Activated naive CD4-positive, alpha-beta T cell treated with anti-CD3 and anti-CD28 coated beads for 36 hours (primary cell): ENCODE measurements at regions of chr11 and their contacts with region 1.

Region 1: GRCh38 chr11:128552783-128553661 is 34.3 kb downstream of the ETS1 start:
- DNase-seq: peak; percentile 68
- H3K4me3 Mint-ChIP-seq: peak overlapping the region; percentile 19
- H3K27ac Mint-ChIP-seq: peak overlapping the region; percentile 95
- H3K4me1 Mint-ChIP-seq: peaks cover 59% of the 10 kb centered on the region
- H3K27me3 Mint-ChIP-seq: no peaks in the 10 kb centered on the region

Region 2: DNA sequence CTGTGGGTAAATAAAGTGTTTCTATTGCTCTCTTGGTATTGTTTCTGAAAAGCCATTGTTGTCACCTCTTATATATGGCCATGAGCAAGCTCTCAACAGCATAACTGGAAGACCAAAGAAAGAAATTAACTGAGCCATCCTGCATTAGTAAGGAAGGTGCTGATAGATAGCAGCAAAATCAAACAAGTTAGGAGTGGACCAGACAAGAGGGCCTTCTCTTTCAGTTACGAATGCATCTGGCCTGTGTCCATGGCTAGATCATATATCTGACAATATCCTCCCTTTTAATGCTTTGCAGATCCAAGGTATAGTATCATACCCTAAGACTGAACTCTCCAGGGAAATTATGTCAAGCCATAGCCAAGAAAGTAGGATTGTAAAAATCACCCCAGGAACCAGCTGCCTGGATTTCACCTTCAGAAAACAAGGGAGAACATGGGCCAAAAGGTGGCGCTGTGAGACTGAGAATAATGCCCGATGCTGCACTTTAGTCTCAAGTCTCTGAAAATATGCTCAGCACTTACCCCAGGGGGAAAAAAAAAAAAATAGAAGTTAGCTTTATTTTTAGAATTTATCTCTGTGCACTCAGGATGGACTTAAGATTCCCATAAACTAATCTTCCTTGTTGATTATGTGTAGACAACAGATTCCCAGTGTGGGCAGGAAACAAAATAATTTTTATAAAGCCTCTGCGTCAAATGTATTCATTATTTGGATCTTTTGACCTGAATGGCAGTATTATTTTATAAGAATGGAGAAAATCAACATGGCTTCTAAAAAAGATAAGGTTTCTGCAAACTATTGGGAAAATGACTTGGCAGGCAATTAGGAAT is 380.8 kb before region 1 on chr11:
- CTCF ChIA-PET with region 1: interaction called, 3 read pairs
- intact Hi-C with region 1: loop called (anchors 1 kb)
- DNase-seq: peak; percentile 96
- H3K4me3 Mint-ChIP-seq: no peak overlapping the region
- H3K27ac Mint-ChIP-seq: no peak overlapping the region
- H3K4me1 Mint-ChIP-seq: peaks cover 7% of the 10 kb centered on the region
- H3K27me3 Mint-ChIP-seq: no peaks in the 10 kb centered on the region

Region 3: DNA sequence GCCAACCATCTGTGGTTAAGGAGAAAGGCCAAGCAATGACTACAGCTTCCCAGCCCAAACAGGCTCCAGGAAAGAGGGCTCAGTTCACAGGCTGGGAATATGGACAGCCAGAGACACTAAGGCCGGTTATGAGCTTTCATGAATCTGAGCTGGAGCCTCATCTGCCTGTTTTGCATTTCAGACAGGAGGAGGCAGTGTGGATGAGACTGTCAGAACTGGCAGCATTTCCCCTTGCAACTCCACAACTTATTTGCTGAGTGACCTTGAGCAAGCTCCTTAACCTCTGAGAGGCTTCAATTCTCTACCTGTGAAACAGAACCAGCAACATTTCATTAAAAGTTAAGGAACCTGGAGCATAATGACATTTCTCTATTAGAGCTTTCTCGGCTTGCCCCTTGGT is 229.6 kb before region 1 on chr11:
- CTCF ChIA-PET with region 1: no interaction called
- intact Hi-C with region 1: loop called (anchors 1 kb)
- DNase-seq: peak; percentile 72
- H3K4me3 Mint-ChIP-seq: peak overlapping the region; percentile 32
- H3K27ac Mint-ChIP-seq: peak overlapping the region; percentile 90
- H3K4me1 Mint-ChIP-seq: peaks cover 87% of the 10 kb centered on the region
- H3K27me3 Mint-ChIP-seq: no peaks in the 10 kb centered on the region

Region 4: DNA sequence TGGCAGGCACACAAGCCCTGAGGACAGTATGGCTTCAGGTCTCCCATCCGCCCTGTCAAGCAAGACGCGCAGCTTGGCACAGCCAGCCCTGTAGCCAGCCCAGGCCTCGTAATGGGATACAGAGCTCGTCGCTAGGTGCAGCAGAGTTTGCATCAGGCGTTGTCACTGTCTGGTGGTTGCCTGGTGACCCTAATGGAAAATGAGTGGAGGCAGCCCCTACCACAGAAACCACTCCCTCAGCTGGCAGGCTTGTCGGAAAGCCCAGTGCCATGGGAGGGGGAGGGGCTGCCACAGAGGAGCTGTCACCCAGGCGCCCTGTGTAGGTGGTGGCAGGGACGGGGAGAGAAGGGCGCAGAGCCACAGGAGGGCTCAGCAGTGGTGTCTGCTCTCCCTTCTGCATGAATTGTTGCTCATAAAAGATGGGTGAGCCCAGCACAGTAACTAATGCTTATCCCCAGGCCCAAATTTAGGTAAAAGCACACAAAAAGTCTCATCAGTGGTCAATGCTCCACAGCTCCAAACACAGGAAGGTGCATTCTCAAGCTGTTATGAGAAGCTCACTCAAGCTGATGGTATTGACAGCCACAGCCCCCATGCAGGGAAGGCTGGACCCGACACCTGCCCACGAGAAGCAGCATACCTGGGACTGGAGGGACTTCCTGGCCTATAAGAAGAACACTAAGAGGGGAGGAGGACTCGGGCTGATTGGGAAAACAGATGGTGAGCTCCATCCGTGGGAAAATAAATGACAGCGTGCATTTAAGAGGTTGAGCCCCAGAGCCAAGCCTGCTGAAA is 130.2 kb before region 1 on chr11:
- CTCF ChIA-PET with region 1: no interaction called
- intact Hi-C with region 1: loop called (anchors 1 kb)
- DNase-seq: peak; percentile 96
- H3K4me3 Mint-ChIP-seq: peak overlapping the region; percentile 44
- H3K27ac Mint-ChIP-seq: peak overlapping the region; percentile 75
- H3K4me1 Mint-ChIP-seq: peaks cover 63% of the 10 kb centered on the region
- H3K27me3 Mint-ChIP-seq: no peaks in the 10 kb centered on the region

Region 5: DNA sequence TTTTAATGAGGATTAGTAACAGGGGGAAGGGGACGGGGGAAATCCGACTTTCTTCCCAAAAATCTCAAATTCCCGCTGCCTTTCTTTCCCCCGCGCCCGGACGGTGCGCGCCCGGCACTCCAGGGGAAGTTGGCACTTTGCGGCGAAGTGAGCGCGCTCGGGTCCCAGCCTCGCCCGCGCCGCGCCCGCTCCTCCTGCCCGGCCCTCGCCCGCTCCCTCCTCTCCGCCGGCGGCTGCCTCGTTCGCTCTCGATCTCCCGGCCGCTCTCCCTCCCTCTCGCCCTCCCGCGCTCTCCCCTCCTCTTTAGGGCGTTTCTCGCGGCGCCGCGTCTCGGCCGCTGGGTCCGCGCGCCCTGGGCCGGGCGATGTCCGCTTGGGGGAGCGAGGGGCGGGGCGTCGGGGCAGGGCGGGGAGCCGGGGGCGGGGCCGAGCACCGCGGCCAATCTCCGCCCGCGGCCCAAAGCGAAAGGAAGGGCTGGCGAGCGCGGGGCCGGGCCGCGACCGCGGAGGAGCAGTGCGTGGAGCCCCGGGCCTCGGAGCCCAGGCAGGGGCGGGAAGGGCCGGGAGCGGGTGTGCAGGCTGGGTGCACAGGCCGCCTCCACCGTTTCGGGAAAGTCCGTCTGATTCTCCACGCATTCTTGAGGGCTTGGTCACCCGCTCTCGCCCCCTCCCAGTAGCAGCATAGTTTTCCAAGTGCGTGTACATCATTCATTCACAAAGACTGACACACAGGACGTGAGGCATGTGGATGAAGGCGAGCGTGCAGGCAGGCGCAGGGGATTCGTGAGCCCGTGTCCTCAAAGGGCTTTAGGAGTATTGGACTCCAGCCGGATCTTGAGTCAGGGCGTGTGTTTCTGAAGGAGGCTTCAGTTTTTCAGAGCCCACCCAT is 30.7 kb before region 1 on chr11:
- CTCF ChIA-PET with region 1: interaction called, 11 read pairs
- intact Hi-C with region 1: loop called (anchors 1 kb)
- DNase-seq: peak; percentile 92
- H3K4me3 Mint-ChIP-seq: peak overlapping the region; percentile 96
- H3K27ac Mint-ChIP-seq: peak overlapping the region; percentile 97
- H3K4me1 Mint-ChIP-seq: peaks cover 42% of the 10 kb centered on the region
- H3K27me3 Mint-ChIP-seq: no peaks in the 10 kb centered on the region

Region 6: GRCh38 chr11:128624269-128625175 is 71.5 kb after region 1 on chr11:
- CTCF ChIA-PET with region 1: interaction called, 13 read pairs
- intact Hi-C with region 1: loop called (anchors 1 kb)
- DNase-seq: peak; percentile 79
- H3K4me3 Mint-ChIP-seq: peak overlapping the region; percentile 59
- H3K27ac Mint-ChIP-seq: peak overlapping the region; percentile 89
- H3K4me1 Mint-ChIP-seq: peaks cover 92% of the 10 kb centered on the region
- H3K27me3 Mint-ChIP-seq: no peaks in the 10 kb centered on the region

Region 7: GRCh38 chr11:128695539-128696221 is 142.7 kb after region 1 on chr11:
- CTCF ChIA-PET with region 1: no interaction called
- intact Hi-C with region 1: no loop called
- DNase-seq: peak; percentile 58
- H3K4me3 Mint-ChIP-seq: peak overlapping the region; percentile 90
- H3K27ac Mint-ChIP-seq: peak overlapping the region; percentile 94
- H3K4me1 Mint-ChIP-seq: peaks cover 54% of the 10 kb centered on the region
- H3K27me3 Mint-ChIP-seq: peaks cover 7% of the 10 kb centered on the region